Right ventricle myocardium superior (tissue), 1 donor: ENCODE measurements at regions of chr12 and their contacts with region 1.

Region 1: DNA sequence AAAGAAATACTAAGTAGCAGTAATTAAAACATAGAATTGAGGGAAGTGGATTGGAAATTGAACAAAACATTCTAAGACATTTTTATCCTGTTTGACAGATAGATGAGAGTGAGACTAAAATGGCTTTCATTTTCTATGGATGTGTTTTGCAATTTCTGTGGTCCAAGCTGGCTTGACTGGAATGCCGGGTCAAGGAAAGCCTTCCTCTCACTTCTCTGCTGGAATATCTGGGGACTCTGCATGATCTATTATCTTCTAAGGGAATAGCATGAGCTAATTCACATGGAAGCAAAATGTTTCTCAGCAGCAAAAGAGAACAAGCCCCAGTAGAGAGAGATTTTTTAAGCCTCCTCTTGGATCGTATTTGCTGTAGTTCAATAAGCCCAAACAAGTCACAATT is 407.9 kb upstream of the ATXN7L3B start:
- DNase-seq: no peak
- ATAC-seq: no peak

Region 2: GRCh38 chr12:74152370-74152769 is 22.7 kb after region 1 on chr12:
- intact Hi-C with region 1: no loop called
- DNase-seq: no peak
- ATAC-seq: no peak

Region 3: GRCh38 chr12:74193191-74193590 is 63.5 kb after region 1 on chr12:
- intact Hi-C with region 1: loop called (anchors 10 kb)
- DNase-seq: no peak
- ATAC-seq: no peak